PC-3 (cell line): ENCODE measurements at regions of chr9 and their contacts with region 1.

Region 1: DNA sequence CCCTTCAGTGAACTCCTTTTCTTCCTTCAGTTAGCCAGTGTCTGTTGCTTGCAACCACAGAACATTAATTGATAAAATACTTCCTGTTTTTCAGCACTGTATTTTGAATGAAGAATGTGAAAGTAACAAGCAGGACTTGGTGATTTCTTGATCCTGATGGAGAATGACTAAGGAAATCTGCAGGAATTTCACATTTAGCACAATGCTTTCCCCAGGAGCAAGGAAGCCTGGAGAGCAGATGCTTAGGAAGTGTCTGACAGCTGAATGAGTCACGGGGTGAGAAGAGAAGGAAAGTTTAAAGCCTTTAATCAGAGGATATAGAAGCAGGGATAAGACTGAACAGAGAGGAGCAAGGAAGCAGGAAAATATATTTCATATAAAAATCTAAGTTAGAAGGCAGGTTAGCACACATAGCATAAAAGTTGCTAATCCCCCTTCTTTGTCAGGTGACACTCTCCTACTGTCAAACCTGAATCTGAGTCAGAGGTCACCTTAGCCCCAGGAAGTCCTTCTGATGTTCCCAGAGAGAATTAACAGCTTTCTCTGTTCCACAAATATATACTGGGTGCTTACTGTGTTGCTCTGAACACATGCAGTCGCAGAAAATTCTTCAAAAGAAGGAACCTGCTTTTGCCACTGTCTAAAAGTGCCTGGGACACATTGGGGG is 59.7 kb downstream of the GNA14 start:
- DNase-seq: peak; percentile 88
- ATAC-seq: peak; percentile 72
- H3K4me3 ChIP-seq: peak overlapping the region; percentile 54
- H3K27ac ChIP-seq: peak overlapping the region; percentile 99
- H3K4me1 ChIP-seq: peaks cover 28% of the 10 kb centered on the region
- H3K27me3 ChIP-seq: no peaks in the 10 kb centered on the region
- CTCF ChIP-seq: no peak

Region 2: GRCh38 chr9:77456829-77457437 is 131.5 kb before region 1 on chr9:
- CTCF ChIA-PET with region 1: no interaction called
- POLR2A ChIA-PET with region 1: no interaction called
- intact Hi-C with region 1: loop called (anchors 2 kb)
- DNase-seq: peak; percentile 93
- ATAC-seq: peak; percentile 73
- H3K4me3 ChIP-seq: no peak overlapping the region
- H3K27ac ChIP-seq: no peak overlapping the region
- H3K4me1 ChIP-seq: no peaks in the 10 kb centered on the region; the same call in 1 of the 2 replicates
- H3K27me3 ChIP-seq: no peaks in the 10 kb centered on the region
- CTCF ChIP-seq: peak; percentile 74

Region 3: GRCh38 chr9:77495834-77496671 is 92.4 kb before region 1 on chr9:
- CTCF ChIA-PET with region 1: no interaction called
- POLR2A ChIA-PET with region 1: no interaction called
- intact Hi-C with region 1: loop called (anchors 1 kb)
- DNase-seq: peak; percentile 79
- ATAC-seq: peak; percentile 90
- H3K4me3 ChIP-seq: peak overlapping the region; percentile 9; the same call in 1 of the 2 replicates
- H3K27ac ChIP-seq: peak overlapping the region; percentile 94
- H3K4me1 ChIP-seq: peaks cover 27% of the 10 kb centered on the region
- H3K27me3 ChIP-seq: no peaks in the 10 kb centered on the region
- CTCF ChIP-seq: no peak

Region 4: GRCh38 chr9:77514886-77515711 is 73.3 kb before region 1 on chr9:
- CTCF ChIA-PET with region 1: no interaction called
- POLR2A ChIA-PET with region 1: no interaction called
- intact Hi-C with region 1: loop called (anchors 1 kb)
- DNase-seq: peak; percentile 75
- ATAC-seq: peak; percentile 92
- H3K4me3 ChIP-seq: no peak overlapping the region
- H3K27ac ChIP-seq: peak overlapping the region; percentile 91
- H3K4me1 ChIP-seq: peaks cover 27% of the 10 kb centered on the region
- H3K27me3 ChIP-seq: no peaks in the 10 kb centered on the region
- CTCF ChIP-seq: no peak

Region 5: DNA sequence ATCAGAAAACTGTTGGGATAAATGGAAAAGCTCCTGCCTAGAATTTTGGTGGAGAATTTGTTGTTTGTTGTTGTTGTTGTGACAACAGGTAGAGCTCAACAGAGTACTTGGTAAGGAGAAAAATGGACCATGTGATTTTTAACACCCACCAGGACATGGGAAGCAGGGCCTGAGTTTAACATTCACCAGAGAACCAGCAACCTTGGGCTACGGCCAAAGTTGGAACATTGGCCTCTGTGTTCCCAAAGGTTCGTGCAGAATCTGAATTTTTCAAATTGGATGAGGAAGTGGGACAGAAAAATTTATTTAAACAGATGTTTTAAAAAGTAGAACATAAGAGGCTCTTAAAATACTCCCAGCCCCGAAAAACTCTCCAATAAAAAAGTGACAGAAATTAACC is 67.3 kb before region 1 on chr9:
- CTCF ChIA-PET with region 1: no interaction called
- POLR2A ChIA-PET with region 1: no interaction called
- intact Hi-C with region 1: loop called (anchors 2 kb)
- DNase-seq: no peak
- ATAC-seq: no peak
- H3K4me3 ChIP-seq: no peak overlapping the region
- H3K27ac ChIP-seq: no peak overlapping the region
- H3K4me1 ChIP-seq: peaks cover 23% of the 10 kb centered on the region
- H3K27me3 ChIP-seq: no peaks in the 10 kb centered on the region
- CTCF ChIP-seq: no peak

Region 6: GRCh38 chr9:77661566-77662085 is 73.2 kb after region 1 on chr9:
- CTCF ChIA-PET with region 1: no interaction called
- POLR2A ChIA-PET with region 1: no interaction called
- intact Hi-C with region 1: no loop called
- DNase-seq: no peak
- ATAC-seq: no peak
- H3K4me3 ChIP-seq: no peak overlapping the region
- H3K27ac ChIP-seq: no peak overlapping the region
- H3K4me1 ChIP-seq: peaks cover 15% of the 10 kb centered on the region
- H3K27me3 ChIP-seq: no peaks in the 10 kb centered on the region
- CTCF ChIP-seq: no peak

Region 7: DNA sequence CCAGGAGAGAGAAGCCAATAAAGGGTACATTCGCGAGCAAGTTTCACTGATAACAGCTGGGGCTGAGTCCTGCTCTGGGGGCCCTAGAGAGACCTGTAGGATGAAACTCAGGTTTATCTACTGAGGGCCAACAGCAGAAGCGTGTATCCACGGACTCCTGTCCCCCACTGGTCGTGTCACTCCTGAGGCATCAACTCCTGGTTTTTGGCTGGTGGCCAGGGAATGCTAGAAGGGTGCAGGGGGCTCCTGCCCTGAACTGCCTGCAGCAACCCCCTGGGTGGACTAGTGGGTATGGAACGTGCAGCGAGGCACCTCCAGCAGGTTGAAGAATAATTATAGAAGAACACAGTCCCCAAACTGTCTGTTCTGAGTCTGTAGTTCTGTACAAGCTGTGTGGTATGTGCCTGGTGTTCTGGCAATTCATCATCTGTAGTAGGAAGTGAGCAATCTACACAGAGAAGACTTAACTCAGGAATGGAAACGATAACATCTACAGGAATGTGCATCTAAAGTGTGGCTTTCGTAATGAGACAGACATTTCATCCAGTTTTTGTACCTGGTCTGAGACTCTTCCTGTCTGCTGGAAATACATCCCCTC is 124.2 kb after region 1 on chr9:
- CTCF ChIA-PET with region 1: no interaction called
- POLR2A ChIA-PET with region 1: no interaction called
- intact Hi-C with region 1: loop called (anchors 5 kb)
- DNase-seq: peak; percentile 67
- ATAC-seq: peak; percentile 88
- H3K4me3 ChIP-seq: no peak overlapping the region
- H3K27ac ChIP-seq: no peak overlapping the region
- H3K4me1 ChIP-seq: peaks cover 46% of the 10 kb centered on the region
- H3K27me3 ChIP-seq: no peaks in the 10 kb centered on the region
- CTCF ChIP-seq: no peak